GM10248 (cell line): ENCODE measurements at regions of chr6 and their contacts with region 1.

Region 1: GRCh38 chr6:134938896-134939295 is 11.0 kb downstream of the ALDH8A1 start:
- DNase-seq: peak; percentile 50
- CTCF ChIP-seq: no peak

Region 2: DNA sequence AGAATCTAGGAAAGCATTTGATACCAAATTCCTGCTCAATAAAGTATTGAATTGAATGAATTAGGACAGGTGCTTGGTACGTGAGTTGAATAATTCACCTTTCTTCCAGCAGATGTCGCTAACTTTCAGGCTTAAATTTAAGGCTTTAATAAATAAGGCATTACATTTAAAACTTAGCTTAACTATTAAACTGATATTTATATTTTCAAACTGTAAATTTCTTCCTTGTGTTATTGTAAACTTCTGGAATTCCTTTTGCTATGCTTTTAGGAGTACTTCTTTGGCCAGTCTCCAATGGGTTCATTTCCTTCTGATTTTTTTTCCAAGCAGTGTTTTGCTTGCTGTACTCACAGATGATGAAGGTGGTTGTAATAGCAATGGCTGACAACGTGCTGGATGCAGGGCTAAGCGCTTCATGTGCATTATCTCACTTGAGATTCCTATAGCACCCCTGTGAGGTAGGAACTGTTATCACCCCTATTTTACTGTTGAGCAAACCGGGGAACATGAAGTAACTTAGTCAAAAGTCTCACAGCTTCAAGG is 815.2 kb before region 1 on chr6:
- CTCF ChIA-PET with region 1: interaction called, 50 read pairs
- POLR2A ChIA-PET with region 1: no interaction called
- DNase-seq: no peak
- CTCF ChIP-seq: peak; percentile 73

Region 3: DNA sequence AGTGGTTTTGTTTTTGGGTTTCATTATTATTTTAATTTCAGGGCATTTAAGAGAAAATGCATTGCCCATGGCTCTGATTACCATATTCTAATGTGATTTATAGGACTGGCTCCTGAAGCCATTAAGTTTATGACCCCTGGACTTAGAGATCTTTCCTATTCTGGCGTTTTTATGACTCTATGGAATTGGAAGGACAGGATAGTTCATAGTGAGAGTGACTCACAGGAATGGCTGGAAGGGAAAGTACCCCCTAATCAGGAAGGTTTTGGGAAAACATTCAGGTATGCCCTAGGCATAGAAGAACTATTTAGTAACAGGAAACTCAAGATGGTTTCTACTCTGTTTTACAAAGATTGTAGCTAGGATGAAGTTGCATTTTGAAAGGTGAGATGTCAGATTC is 777.9 kb before region 1 on chr6:
- CTCF ChIA-PET with region 1: interaction called, 50 read pairs
- POLR2A ChIA-PET with region 1: no interaction called
- DNase-seq: no peak
- CTCF ChIP-seq: no peak

Region 4: DNA sequence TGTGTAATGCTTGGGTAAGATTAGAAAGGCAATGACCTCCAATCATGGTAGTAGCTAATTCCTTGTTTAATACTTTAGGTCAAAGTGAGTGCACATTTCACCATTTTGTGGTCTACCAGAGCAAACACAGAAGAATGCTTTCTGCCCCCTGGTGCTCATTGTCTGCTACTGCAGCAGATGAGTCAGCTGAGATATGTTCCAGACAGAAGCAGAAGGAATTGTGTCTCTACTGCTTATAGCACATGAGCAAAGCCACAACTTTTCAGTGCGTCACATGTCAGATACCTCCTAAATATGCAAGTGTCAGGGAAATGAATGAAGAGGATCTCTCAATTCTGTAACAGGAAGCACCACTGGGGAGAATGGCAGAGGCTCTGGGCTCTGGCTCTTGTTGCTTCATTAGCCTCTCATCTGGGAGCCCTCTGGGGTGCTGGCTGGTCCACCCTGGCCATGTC is 297.9 kb before region 1 on chr6:
- CTCF ChIA-PET with region 1: interaction called, 16 read pairs
- POLR2A ChIA-PET with region 1: no interaction called
- DNase-seq: peak; percentile 67
- CTCF ChIP-seq: peak; percentile 96

Region 5: GRCh38 chr6:134925800-134926199 is 13.1 kb before region 1 on chr6:
- CTCF ChIA-PET with region 1: interaction called, 32 read pairs
- POLR2A ChIA-PET with region 1: no interaction called
- DNase-seq: no peak
- CTCF ChIP-seq: no peak

Region 6: GRCh38 chr6:135358251-135358821 is 419.4 kb after region 1 on chr6:
- CTCF ChIA-PET with region 1: no interaction called
- POLR2A ChIA-PET with region 1: no interaction called
- DNase-seq: no peak
- CTCF ChIP-seq: no peak